HCT116 (cell line): ENCODE measurements at regions of chr3 and their contacts with region 1.

Region 1: GRCh38 chr3:17841190-17841828 is 98.9 kb upstream of the TBC1D5 start:
- DNase-seq: peak; percentile 45
- ATAC-seq: peak; percentile 99
- H3K4me3 ChIP-seq: no peak overlapping the region
- H3K27ac ChIP-seq: no peak overlapping the region
- H3K4me1 ChIP-seq: no peaks in the 10 kb centered on the region
- H3K27me3 ChIP-seq: no peaks in the 10 kb centered on the region
- CTCF ChIP-seq: peak; percentile 91 to 98 (median 95)
- POLR2A ChIP-seq: no peak
- RAD21 ChIP-seq: peak; percentile 96

Region 2: DNA sequence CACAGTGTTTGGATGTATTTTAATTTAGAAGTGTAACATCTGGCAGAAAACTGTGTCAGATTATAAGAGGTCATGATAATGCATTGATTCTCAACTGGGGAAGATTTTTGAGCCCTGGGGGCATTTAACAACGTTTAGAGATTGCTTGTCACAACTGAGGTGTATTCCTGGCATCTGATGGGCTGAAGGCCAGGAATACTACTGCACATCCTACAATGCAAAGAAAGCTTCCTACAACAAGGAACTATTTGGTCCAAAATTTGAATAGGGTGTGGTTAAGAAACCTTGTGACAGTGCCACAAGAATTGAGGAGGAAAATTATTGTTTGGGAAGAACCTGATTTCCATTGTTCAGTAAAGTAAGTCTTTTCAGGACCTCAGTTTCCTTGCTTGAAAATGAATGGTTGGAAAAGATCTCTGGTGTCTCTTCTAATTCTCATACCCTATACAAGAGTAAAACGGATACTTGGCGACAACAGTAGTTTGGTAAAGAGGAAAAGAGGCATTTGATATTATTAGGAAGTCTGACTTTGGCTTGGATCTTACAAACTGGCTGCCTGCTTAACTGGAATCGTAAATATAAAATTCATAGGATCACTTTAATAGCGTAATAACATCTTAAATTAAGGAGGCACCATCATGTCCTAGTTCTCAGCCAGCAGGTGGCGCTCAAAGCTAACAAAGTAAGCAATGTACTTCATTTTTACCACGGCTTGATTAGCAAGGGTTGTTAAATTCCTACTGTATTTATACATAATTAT is 1240.3 kb before region 1 on chr3:
- CTCF ChIA-PET with region 1: no interaction called
- POLR2A ChIA-PET with region 1: no interaction called
- RAD21 ChIA-PET with region 1: no interaction called
- intact Hi-C with region 1: loop called (anchors 10 kb)
- DNase-seq: peak; percentile 72
- ATAC-seq: peak; percentile 85
- H3K4me3 ChIP-seq: peak overlapping the region in 1 of 2 experiments; percentile 34; a peak in 1 of 4 replicates
- H3K27ac ChIP-seq: no peak overlapping the region
- H3K4me1 ChIP-seq: no peaks in the 10 kb centered on the region
- H3K27me3 ChIP-seq: no peaks in the 10 kb centered on the region
- CTCF ChIP-seq: peak; percentile 60 to 69 (median 69)
- POLR2A ChIP-seq: no peak
- RAD21 ChIP-seq: peak; percentile 92

Region 3: DNA sequence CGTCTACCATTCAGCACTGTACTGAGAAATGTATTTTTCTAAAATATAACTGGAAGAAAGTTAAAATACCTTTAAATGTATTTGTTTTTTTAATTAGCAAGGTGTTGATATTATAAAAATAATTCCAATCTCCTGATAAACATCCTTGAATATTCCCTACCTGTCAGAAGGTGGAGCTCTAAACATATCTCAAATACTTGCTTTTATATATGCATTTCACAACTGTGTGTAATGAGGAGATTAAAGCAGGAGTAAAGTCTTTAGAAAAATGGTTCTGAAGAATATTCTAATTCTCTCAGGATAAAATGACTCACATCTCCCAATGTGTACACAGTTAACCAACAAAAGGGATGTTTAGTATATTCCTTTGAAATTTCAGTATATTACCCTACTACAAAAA is 533.8 kb before region 1 on chr3:
- CTCF ChIA-PET with region 1: no interaction called
- POLR2A ChIA-PET with region 1: no interaction called
- RAD21 ChIA-PET with region 1: no interaction called
- intact Hi-C with region 1: loop called (anchors 1 kb)
- DNase-seq: no peak
- ATAC-seq: no peak
- H3K4me3 ChIP-seq: no peak overlapping the region
- H3K27ac ChIP-seq: no peak overlapping the region
- H3K4me1 ChIP-seq: no peaks in the 10 kb centered on the region
- H3K27me3 ChIP-seq: no peaks in the 10 kb centered on the region
- CTCF ChIP-seq: peak; percentile 4 to 31 (median 22); a peak in 3 of 6 replicates
- POLR2A ChIP-seq: no peak
- RAD21 ChIP-seq: peak; percentile 43

Region 4: GRCh38 chr3:17407576-17407975 is 433.7 kb before region 1 on chr3:
- CTCF ChIA-PET with region 1: no interaction called
- POLR2A ChIA-PET with region 1: no interaction called
- RAD21 ChIA-PET with region 1: no interaction called
- intact Hi-C with region 1: no loop called
- DNase-seq: no peak
- ATAC-seq: no peak
- H3K4me3 ChIP-seq: no peak overlapping the region
- H3K27ac ChIP-seq: no peak overlapping the region
- H3K4me1 ChIP-seq: no peaks in the 10 kb centered on the region
- H3K27me3 ChIP-seq: no peaks in the 10 kb centered on the region
- CTCF ChIP-seq: no peak
- POLR2A ChIP-seq: no peak
- RAD21 ChIP-seq: no peak

Region 5: GRCh38 chr3:17431004-17431403 is 410.3 kb before region 1 on chr3:
- CTCF ChIA-PET with region 1: interaction called, 19 read pairs
- POLR2A ChIA-PET with region 1: interaction called, 4 read pairs
- RAD21 ChIA-PET with region 1: no interaction called
- intact Hi-C with region 1: loop called (anchors 1 kb)
- DNase-seq: peak; percentile 19
- ATAC-seq: peak; percentile 79
- H3K4me3 ChIP-seq: no peak overlapping the region
- H3K27ac ChIP-seq: no peak overlapping the region
- H3K4me1 ChIP-seq: no peaks in the 10 kb centered on the region
- H3K27me3 ChIP-seq: no peaks in the 10 kb centered on the region
- CTCF ChIP-seq: peak; percentile 33 to 52 (median 44); a peak in 3 of 6 replicates
- POLR2A ChIP-seq: no peak
- RAD21 ChIP-seq: peak; percentile 72

Region 6: DNA sequence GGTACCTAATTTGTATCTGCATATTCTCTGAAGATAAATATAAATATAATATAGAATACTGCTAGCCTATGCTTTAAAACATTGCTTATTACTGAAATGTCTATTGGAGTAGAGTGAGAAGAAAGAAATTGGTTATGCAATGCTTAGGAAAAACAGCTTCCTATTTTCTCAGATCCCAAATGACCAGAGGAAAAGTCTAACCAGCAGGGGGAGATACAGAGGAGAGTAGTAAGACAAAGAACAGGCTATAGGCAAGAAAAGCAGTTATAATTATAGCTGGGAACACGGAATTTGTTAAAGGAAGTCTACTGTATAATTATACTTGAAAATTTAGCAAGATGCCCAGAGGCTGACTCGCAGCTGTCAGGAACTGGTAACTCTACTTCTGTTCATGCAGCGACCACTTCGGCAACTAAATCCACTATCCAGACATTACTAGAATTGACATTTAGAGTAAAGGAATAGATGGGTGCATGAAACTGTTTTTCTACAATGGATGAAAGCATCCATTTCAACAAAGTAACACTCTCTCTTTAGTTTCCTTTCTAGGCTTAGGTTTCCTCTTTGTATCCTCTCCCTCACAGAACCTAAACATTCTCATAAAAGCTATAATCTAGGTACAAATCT is 196.1 kb before region 1 on chr3:
- CTCF ChIA-PET with region 1: interaction called, 19 read pairs
- POLR2A ChIA-PET with region 1: no interaction called
- RAD21 ChIA-PET with region 1: interaction called, 4 to 6 read pairs
- intact Hi-C with region 1: loop called (anchors 1 kb)
- DNase-seq: peak; percentile 43
- ATAC-seq: peak; percentile 74
- H3K4me3 ChIP-seq: no peak overlapping the region
- H3K27ac ChIP-seq: no peak overlapping the region
- H3K4me1 ChIP-seq: peaks cover 7 to 19% of the 10 kb centered on the region in 2 experiments
- H3K27me3 ChIP-seq: no peaks in the 10 kb centered on the region
- CTCF ChIP-seq: peak; percentile 40 to 77 (median 77); a peak in 5 of 6 replicates
- POLR2A ChIP-seq: no peak
- RAD21 ChIP-seq: peak; percentile 62

Region 7: GRCh38 chr3:17755836-17756235 is 85.5 kb before region 1 on chr3:
- CTCF ChIA-PET with region 1: no interaction called
- POLR2A ChIA-PET with region 1: no interaction called
- RAD21 ChIA-PET with region 1: no interaction called
- intact Hi-C with region 1: no loop called
- DNase-seq: no peak
- ATAC-seq: no peak
- H3K4me3 ChIP-seq: no peak overlapping the region
- H3K27ac ChIP-seq: no peak overlapping the region
- H3K4me1 ChIP-seq: no peaks in the 10 kb centered on the region
- H3K27me3 ChIP-seq: no peaks in the 10 kb centered on the region
- CTCF ChIP-seq: no peak
- POLR2A ChIP-seq: no peak
- RAD21 ChIP-seq: no peak